GM23248 (cell line): ENCODE measurements at regions of chr17 and their contacts with region 1.

Region 1: GRCh38 chr17:4004517-4005295 is 40.5 kb upstream of the ATP2A3 start:
- DNase-seq: peak; percentile 70
- H3K4me3 ChIP-seq: no peak overlapping the region
- H3K27ac ChIP-seq: no peak overlapping the region
- H3K4me1 ChIP-seq: peaks cover 7% of the 10 kb centered on the region
- H3K27me3 ChIP-seq: no peaks in the 10 kb centered on the region

Region 2: GRCh38 chr17:3827124-3827773 is 177.5 kb before region 1 on chr17:
- in situ Hi-C with region 1: no loop called
- DNase-seq: peak; percentile 65
- H3K4me3 ChIP-seq: no peak overlapping the region
- H3K27ac ChIP-seq: no peak overlapping the region
- H3K4me1 ChIP-seq: no peaks in the 10 kb centered on the region
- H3K27me3 ChIP-seq: no peaks in the 10 kb centered on the region

Region 3: GRCh38 chr17:3913531-3914311 is 91.0 kb before region 1 on chr17:
- in situ Hi-C with region 1: loop called (anchors 10 kb)
- DNase-seq: peak; percentile 85
- H3K4me3 ChIP-seq: no peak overlapping the region
- H3K27ac ChIP-seq: no peak overlapping the region
- H3K4me1 ChIP-seq: no peaks in the 10 kb centered on the region
- H3K27me3 ChIP-seq: no peaks in the 10 kb centered on the region

Region 4: DNA sequence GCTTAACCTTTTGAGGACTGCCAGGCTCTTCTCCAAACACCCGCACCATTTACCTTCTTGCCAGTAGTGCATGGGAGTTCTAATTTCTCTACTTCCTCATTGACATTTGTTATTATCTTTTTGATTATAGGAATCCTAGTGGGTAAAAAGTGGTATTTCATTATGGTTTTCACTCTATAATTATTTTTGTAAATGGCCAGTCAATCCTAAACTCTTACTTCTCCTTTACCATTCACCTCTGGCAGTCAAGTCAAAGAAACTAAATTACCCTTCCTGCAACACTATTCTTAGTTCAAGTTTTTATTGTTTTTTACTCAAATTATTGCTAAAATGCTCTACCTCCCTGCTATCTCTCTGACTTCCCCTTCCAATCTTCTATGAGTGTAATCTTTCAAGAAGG is 288.9 kb after region 1 on chr17:
- in situ Hi-C with region 1: no loop called
- DNase-seq: no peak
- H3K4me3 ChIP-seq: no peak overlapping the region
- H3K27ac ChIP-seq: no peak overlapping the region
- H3K4me1 ChIP-seq: peaks cover 16% of the 10 kb centered on the region
- H3K27me3 ChIP-seq: no peaks in the 10 kb centered on the region